ENCODE measurements at regions of chr17 and their contacts with region 1.

Region 1: DNA sequence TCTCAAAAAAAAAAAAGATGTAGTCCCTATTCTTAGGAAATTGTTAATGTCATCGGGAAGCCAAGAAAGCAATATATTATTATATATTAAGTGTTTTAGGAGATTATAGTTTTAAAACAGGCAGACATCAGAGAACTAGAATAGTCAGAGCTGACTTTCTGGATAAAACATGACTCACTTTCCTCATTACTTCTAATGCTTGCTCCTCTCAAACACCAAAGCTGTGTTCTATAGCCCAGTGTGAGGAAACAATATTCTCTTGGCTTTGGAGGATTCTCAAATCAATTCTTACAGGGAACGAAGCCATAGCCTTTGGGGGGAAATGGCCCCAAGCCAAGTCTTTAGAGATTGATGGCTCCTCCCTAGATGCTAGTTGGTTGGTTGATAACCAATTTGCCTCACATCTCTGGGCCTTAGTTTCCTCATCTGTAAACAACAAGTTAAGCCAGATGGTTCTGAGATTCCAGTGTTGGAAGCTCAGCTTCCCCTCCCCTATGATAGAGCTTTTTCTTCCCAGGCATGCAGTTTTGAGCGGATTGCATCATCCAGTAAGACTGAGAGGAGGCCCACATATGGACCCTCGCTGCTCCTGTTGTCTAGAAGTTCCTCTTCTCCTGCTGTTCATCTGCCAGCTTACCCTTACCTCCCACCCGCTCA is 12.4 kb downstream of the NMT1 start:
- DNase-seq: peak in 1 of 4 experiments; percentile 11
- ATAC-seq: peak; percentile 79
- H3K4me3 ChIP-seq: no peak overlapping the region
- H3K27ac ChIP-seq: no peak overlapping the region; the same call in 2 of the 3 replicates
- H3K4me1 ChIP-seq: peaks cover 0 to 5% of the 10 kb centered on the region in 2 experiments; a peak in 1 of 5 replicates
- H3K27me3 ChIP-seq: no peaks in the 10 kb centered on the region
- CTCF ChIP-seq: no peak
- EP300 ChIP-seq: no peak
- POLR2A ChIP-seq: no peak
- RAD21 ChIP-seq: 0 out of 4 replicates have a peak, but pooled peaks of 1 of the 2 experiments have one; percentile 14

Region 2: GRCh38 chr17:45060797-45061605 is 12.5 kb before region 1 on chr17 and contains the start of gene NMT1:
- CTCF ChIA-PET with region 1: no interaction called
- POLR2A ChIA-PET with region 1: interaction called, 62 read pairs
- in situ Hi-C with region 1: no loop called
- intact Hi-C with region 1: no loop called
- DNase-seq: peak; percentile 92 to 99 (median 96)
- ATAC-seq: peak; percentile 93
- H3K4me3 ChIP-seq: peak within 1 kb of the TSS; percentile 67
- H3K27ac ChIP-seq: peak within 1 kb of the TSS; percentile 97
- H3K4me1 ChIP-seq: peaks cover 7 to 12% of the 10 kb centered on the region in 2 experiments; a peak in 3 of 5 replicates
- H3K27me3 ChIP-seq: no peaks in the 10 kb centered on the region
- CTCF ChIP-seq: no peak
- EP300 ChIP-seq: no peak
- POLR2A ChIP-seq: peak; percentile 97
- RAD21 ChIP-seq: 0 out of 4 replicates have a peak, but pooled peaks of 1 of the 2 experiments have one; percentile 5
- polyA plus RNA-seq, gene NMT1: 297 to 332 TPM

Region 3: DNA sequence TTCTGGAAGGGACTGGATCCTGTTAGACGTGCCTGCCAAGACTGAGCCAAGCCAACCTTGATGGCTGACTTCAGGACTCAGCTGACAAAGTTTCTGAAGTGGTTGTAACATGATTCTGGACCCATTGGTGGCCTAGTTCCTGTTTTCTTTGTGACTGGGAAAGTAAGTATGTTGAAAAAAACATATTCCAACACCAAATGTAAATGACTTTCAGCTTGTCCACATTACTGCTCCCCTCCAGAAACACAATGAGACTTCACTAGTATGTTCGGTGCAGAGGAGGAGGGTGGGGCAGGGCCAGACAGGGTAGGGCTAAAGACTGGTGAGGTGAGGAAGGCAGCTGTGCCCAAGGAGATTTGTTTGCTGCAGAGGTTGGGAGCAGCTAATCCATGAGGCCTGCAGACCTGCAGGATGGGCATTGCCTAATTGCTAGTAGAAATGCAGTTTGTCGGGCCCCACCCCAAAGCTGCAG is 14.0 kb after region 1 on chr17:
- CTCF ChIA-PET with region 1: no interaction called
- POLR2A ChIA-PET with region 1: interaction called, 11 read pairs
- in situ Hi-C with region 1: no loop called
- intact Hi-C with region 1: no loop called
- DNase-seq: no peak
- ATAC-seq: no peak
- H3K4me3 ChIP-seq: no peak overlapping the region
- H3K27ac ChIP-seq: no peak overlapping the region
- H3K4me1 ChIP-seq: no peaks in the 10 kb centered on the region
- H3K27me3 ChIP-seq: no peaks in the 10 kb centered on the region
- CTCF ChIP-seq: no peak
- EP300 ChIP-seq: no peak
- POLR2A ChIP-seq: no peak
- RAD21 ChIP-seq: no peak